Activated T-helper 1 cell treated with anti-CD3 and anti-CD28 coated beads, Interleukin-12 subunit alpha, Interleukin-12 subunit beta, Interleukin-2, Interleukin-4 antibody, amounts not matched to agents 30 ng/mL and 10 ng/mL and 1 ng/mL, durations not matched to agents 14 hours and 24 hours and 36 hours (primary cell): ENCODE measurements at regions of chr1 and their contacts with region 1.

Region 1: DNA sequence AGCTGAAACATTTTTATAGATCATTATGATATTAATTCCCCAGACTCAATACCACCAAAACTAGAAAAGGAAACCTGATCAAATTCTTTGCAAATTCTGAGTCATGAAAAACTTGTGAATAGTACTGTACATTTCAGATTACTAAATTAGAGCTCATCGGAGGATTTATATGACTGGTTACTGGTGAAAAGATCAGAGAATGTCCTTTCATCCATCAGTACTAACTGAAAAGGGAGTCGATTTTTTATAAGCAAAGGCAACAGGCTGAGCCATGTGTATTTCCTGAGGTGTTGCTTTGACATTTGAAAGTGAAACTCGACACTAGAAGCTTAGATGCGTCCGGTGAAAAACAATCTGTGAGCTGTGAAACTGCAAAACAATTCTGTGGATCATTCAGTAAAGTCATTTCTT is 155.7 kb downstream of the TNFSF18 start:
- DNase-seq: peak; percentile 34
- H3K4me3 Mint-ChIP-seq: peak overlapping the region; percentile 28
- H3K27ac Mint-ChIP-seq: peak overlapping the region; percentile 7
- H3K4me1 Mint-ChIP-seq: peaks cover 42% of the 10 kb centered on the region
- H3K27me3 Mint-ChIP-seq: peaks cover 13% of the 10 kb centered on the region

Region 2: DNA sequence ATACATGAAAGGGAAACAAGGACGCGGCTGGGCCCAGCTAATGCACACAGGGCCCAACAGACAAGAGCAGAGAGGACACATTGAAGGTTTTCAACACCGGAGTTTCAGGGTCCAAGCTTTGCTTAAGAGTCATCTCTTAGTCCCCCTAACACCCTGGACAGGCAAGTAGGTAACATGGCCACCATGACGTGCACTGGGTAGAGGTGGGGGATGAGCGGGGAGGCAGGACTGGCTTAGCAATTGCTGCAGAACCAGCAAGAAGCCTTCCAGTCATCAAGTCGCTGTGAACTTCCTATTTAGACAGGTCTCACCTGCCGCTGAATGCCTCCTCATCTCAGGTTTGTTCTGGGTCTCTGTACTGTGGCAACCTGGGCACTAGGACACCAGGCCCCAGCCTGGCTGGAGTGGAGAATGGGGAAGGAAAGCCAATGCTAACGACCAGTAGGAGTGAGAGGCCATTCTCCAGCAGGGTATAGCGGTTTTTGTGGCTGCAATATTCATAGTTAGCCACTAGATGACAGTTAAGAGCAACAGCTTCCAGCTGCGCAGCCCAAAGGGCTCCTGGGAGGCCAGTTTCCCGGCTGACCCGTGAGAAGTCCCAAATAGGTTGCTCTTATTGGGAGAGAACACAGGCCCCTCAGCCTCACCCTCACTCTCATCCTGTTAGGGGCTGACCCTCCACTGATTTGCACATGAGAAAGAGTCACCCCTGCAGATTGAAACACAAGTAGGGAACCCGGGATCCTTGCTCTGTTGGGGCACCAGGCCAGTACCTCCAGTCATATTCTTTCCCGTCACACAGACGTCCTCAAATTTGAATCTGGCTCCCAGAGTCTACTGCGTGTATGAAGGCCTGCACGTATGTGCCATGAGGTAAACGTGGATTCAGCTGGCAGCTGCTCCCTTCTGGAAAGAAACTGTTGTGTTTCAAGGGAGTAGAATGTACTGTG is 445.2 kb before region 1 on chr1:
- intact Hi-C with region 1: loop called (anchors 5 kb)
- DNase-seq: peak; percentile 30
- H3K4me3 Mint-ChIP-seq: peak overlapping the region; percentile 43
- H3K27ac Mint-ChIP-seq: no peak overlapping the region
- H3K4me1 Mint-ChIP-seq: peaks cover 40% of the 10 kb centered on the region
- H3K27me3 Mint-ChIP-seq: peaks cover 2% of the 10 kb centered on the region

Region 3: DNA sequence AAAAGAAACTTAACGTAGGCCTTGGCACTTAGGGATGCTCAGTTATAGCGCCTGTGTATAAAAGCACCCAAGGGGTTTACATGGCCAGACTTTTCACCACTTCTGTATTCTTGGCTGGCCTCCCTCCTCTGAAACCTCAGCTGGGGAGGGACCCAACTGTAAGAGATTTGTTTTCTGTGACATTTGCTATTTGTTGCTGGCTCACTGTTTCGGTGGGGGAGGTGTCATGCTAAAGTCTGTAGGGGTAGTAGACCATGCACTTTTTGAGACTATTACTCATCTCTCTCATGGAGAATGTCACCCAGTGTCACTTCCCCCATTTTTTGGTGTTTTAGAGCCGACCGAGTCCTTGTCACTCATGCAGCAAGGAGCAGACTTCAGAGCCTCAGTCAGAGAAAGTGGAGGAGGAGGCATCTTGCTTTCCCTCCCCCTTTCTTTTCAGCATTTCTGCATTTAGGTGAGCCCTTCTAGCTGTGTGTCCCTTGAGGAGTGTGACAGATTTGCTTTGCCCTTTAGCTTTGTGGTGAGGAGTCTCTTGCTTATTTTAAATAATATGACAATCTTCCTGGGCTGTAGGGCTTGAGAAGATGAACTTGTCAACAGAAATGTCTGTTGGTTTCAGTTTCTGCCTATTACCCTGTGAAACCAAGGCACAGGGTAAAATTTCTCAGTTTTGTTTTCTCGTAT is 76.1 kb before region 1 on chr1:
- intact Hi-C with region 1: loop called (anchors 1 kb)
- DNase-seq: peak; percentile 37
- H3K4me3 Mint-ChIP-seq: peak overlapping the region; percentile 59
- H3K27ac Mint-ChIP-seq: peak overlapping the region; percentile 78
- H3K4me1 Mint-ChIP-seq: peaks cover 47% of the 10 kb centered on the region
- H3K27me3 Mint-ChIP-seq: peaks cover 5% of the 10 kb centered on the region

Region 4: DNA sequence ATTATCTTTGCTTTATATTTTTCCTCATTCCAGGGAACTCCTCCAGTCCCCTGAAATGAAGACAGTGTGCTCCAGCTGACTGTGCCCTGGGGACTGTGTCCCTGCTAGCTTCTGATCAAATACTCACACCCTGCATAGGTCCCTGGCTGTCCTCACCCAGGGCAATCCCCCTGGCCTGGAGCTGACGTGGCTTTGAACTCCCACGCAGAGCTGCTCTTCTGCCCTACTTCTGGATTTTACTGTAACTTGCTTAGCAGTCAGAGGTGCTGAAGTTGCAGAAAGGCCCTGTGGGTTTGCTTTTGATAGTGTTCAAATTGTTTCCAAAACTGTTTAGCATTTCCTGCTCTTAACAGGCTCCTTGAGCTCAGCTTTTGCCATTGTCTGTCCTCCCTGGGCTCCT is 49.7 kb before region 1 on chr1:
- intact Hi-C with region 1: loop called (anchors 1 kb)
- DNase-seq: peak; percentile 44
- H3K4me3 Mint-ChIP-seq: peak overlapping the region; percentile 23
- H3K27ac Mint-ChIP-seq: peak overlapping the region; percentile 44
- H3K4me1 Mint-ChIP-seq: peaks cover 33% of the 10 kb centered on the region
- H3K27me3 Mint-ChIP-seq: peaks cover 45% of the 10 kb centered on the region

Region 5: GRCh38 chr1:172883107-172883791 is 11.8 kb before region 1 on chr1:
- intact Hi-C with region 1: loop called (anchors 1 kb)
- DNase-seq: no peak
- H3K4me3 Mint-ChIP-seq: no peak overlapping the region
- H3K27ac Mint-ChIP-seq: peak overlapping the region; percentile 46
- H3K4me1 Mint-ChIP-seq: peaks cover 14% of the 10 kb centered on the region
- H3K27me3 Mint-ChIP-seq: peaks cover 65% of the 10 kb centered on the region

Region 6: DNA sequence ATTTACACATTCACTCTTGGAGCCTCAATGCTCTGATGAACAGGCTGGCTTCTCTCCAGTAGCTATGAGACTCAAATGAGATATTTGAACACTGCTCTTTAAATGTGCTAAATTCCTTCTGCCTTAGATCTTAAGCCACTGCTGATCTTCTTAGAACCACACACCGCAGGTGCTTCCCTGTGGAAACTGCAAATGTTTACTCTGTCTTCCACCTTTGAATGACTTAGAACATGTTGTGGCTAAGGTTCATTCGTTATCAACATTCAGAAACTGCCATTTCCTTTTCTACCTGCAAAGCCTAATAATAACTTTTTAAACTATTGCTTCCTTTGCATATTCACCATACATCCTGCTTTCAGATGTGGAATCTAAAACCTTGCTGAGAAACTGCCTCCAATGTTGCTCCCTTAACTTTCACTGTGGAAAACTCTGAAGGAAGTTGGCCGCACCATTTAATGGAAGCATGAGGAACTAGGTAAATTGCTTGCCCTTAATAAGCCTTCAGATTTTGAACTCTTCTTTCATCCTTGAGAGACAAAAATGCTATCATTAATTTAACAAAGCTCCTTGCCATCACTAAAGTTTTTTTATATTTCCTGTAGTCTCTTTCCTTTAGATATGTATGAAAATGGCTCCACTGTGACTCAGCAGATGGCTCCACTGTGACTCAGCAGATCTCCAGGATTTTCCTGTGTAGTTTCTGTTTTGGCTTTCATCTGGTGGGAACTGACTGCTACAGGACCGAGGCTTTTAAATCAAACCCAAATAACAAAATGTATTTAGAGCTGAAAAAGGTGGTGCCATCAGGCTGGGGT is 11.9 kb after region 1 on chr1:
- intact Hi-C with region 1: no loop called
- DNase-seq: no peak
- H3K4me3 Mint-ChIP-seq: no peak overlapping the region
- H3K27ac Mint-ChIP-seq: peak overlapping the region; percentile 13
- H3K4me1 Mint-ChIP-seq: peaks cover 9% of the 10 kb centered on the region
- H3K27me3 Mint-ChIP-seq: peaks cover 23% of the 10 kb centered on the region

Region 7: GRCh38 chr1:172969611-172970010 is 74.6 kb after region 1 on chr1:
- intact Hi-C with region 1: loop called (anchors 1 kb)
- DNase-seq: no peak
- H3K4me3 Mint-ChIP-seq: no peak overlapping the region
- H3K27ac Mint-ChIP-seq: no peak overlapping the region
- H3K4me1 Mint-ChIP-seq: peaks cover 10% of the 10 kb centered on the region
- H3K27me3 Mint-ChIP-seq: peaks cover 15% of the 10 kb centered on the region